GM12878 (cell line): ENCODE measurements at regions of chr10 and their contacts with region 1.

Region 1: GRCh38 chr10:81179805-81180452 is 642.2 kb downstream of the SH2D4B start:
- DNase-seq: peak; percentile 16
- ATAC-seq: peak; percentile 98
- H3K4me3 ChIP-seq: no peak overlapping the region
- H3K27ac ChIP-seq: no peak overlapping the region
- H3K4me1 ChIP-seq: no peaks in the 10 kb centered on the region
- H3K27me3 ChIP-seq: no peaks in the 10 kb centered on the region
- CTCF ChIP-seq: peak; percentile 53 to 71 (median 54); a peak in 5 of 6 replicates
- EP300 ChIP-seq: no peak
- POLR2A ChIP-seq: no peak
- RAD21 ChIP-seq: peak; percentile 88

Region 2: DNA sequence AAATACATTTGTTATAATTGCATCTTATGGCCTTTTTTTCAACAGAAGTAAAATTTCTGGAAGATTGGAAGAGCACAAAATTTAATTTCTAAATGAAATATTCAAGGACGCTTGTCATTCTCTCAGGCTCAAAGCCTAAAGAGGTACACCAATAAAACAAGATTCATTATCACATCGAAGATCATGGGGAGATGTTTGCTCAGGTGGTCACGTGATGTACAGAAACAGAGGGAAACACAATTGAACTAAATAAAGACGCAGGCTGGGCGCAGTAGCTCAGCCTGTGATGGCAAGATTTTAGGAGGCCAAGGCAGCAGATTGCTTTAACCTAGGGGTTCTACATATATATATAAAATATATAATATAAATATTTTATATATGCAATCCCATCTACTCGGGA is 1138.8 kb before region 1 on chr10:
- CTCF ChIA-PET with region 1: no interaction called
- POLR2A ChIA-PET with region 1: no interaction called
- RAD21 ChIA-PET with region 1: no interaction called
- SMC1A ChIA-PET with region 1: no interaction called
- in situ Hi-C with region 1: no loop called
- intact Hi-C with region 1: no loop called
- DNase-seq: no peak
- ATAC-seq: no peak
- H3K4me3 ChIP-seq: no peak overlapping the region
- H3K27ac ChIP-seq: no peak overlapping the region
- H3K4me1 ChIP-seq: no peaks in the 10 kb centered on the region
- H3K27me3 ChIP-seq: no peaks in the 10 kb centered on the region
- CTCF ChIP-seq: no peak
- EP300 ChIP-seq: no peak
- POLR2A ChIP-seq: no peak
- RAD21 ChIP-seq: no peak

Region 3: DNA sequence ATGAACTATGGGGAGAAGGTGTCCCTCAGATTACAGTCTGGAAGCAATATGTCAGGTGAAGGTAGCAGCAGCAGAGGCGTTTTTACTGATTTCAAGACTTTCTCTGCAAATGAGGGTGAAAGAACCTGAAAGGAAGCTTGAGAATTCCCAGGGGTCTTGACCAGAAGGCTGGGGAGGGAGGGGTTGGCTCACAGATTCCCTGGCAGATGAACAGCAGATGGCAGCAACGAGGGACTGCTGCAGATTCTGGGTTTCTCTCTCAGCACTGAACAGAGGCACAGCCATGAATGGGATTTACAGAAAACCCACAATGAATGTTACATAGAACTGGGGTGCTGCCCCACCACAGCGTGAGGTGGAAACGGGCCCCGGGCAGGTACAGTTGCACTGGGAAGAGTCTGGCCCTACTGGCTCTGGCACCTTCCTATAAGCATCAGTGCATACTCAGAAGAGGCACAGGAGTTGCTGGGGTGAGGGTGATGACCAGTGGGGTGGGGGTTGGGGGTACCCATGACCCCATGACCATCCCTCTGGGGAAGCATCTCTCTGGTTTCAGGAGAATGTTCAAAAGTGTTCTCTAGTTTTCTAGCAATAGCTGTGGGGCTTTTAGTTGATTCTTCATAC is 324.5 kb before region 1 on chr10:
- CTCF ChIA-PET with region 1: interaction called, 51 read pairs
- POLR2A ChIA-PET with region 1: no interaction called
- RAD21 ChIA-PET with region 1: interaction called, 9 read pairs
- SMC1A ChIA-PET with region 1: interaction called, 15 read pairs
- in situ Hi-C with region 1: loop called (anchors 10 kb)
- intact Hi-C with region 1: loop called (anchors 1 kb)
- DNase-seq: peak; percentile 13
- ATAC-seq: peak; percentile 92
- H3K4me3 ChIP-seq: no peak overlapping the region
- H3K27ac ChIP-seq: no peak overlapping the region
- H3K4me1 ChIP-seq: no peaks in the 10 kb centered on the region
- H3K27me3 ChIP-seq: peaks cover 0 to 2% of the 10 kb centered on the region in 2 experiments; a peak in 1 of 4 replicates
- CTCF ChIP-seq: peak; percentile 48 to 72 (median 67); a peak in 5 of 6 replicates
- EP300 ChIP-seq: no peak
- POLR2A ChIP-seq: no peak
- RAD21 ChIP-seq: peak; percentile 49

Region 4: DNA sequence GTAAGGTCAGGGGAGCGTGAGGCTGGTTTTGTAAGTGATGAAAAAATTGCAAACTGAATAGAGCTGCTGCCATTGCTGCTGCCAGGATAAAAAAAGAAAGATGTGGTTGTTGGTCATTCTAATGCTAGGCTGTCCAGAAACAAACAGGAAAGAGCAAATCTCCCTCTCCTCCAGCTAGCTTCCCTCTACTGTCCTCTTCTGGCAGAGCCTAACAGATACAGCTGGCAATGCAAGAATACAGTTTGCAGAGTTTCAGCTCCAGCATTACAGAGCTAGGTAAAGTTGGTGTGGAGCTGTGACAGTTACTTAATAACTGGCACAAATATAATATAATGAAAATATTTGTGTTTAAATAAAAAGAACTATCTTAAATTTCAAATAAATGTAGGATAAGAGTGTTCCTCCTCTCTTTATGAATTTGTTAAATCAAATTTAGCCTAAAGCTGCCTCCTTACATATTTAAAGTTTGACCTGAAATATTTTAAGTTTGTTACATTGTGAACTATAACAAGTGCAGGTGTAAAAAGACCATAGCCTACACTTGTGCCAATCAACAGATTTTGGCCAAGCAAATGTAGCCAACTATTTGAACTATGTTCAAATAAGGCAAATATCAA is 234.6 kb before region 1 on chr10:
- CTCF ChIA-PET with region 1: interaction called, 15 read pairs
- POLR2A ChIA-PET with region 1: no interaction called
- RAD21 ChIA-PET with region 1: interaction called, 32 read pairs
- SMC1A ChIA-PET with region 1: interaction called, 13 read pairs
- in situ Hi-C with region 1: no loop called
- intact Hi-C with region 1: no loop called
- DNase-seq: no peak
- ATAC-seq: peak; percentile 91
- H3K4me3 ChIP-seq: no peak overlapping the region
- H3K27ac ChIP-seq: no peak overlapping the region
- H3K4me1 ChIP-seq: no peaks in the 10 kb centered on the region
- H3K27me3 ChIP-seq: no peaks in the 10 kb centered on the region
- CTCF ChIP-seq: peak; percentile 54 to 86 (median 85)
- EP300 ChIP-seq: no peak
- POLR2A ChIP-seq: no peak
- RAD21 ChIP-seq: peak; percentile 79

Region 5: DNA sequence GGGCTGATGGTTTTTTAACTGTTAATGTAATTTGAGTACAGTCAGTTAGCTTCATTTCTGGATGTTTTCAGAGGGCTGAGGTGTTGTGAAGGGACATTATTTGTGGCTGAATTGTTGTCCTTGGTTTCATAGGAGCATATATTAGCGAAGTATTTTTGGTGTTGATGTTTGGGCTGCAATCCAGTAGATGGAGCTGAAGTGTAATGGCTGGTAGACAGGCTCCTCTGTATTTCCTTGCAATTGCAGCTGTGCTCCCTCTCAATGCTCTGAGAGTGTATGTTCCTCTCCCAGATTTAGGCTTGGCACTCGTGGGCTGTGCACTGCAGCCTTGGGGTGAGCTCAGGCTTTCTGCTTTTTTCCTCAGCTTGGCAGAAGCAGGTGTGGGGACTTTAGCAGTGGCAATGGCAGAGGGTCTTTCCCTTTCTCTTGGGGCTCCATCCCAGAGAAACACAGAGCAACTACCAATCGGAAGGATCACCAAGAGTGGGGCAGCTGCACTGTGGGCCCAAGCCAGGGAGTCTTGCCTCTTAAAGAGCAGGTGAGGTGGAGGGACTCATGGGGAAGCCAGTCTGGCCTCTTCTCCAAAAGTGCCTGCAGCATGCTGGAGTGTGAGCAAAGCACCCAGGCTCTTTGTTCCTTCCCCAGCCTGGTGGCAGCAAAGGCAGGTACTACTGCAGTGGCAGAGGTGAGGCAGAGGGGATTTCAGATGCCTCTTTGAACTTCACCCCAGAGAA is 97.9 kb before region 1 on chr10:
- CTCF ChIA-PET with region 1: interaction called, 82 read pairs
- POLR2A ChIA-PET with region 1: no interaction called
- RAD21 ChIA-PET with region 1: interaction called, 65 read pairs
- SMC1A ChIA-PET with region 1: interaction called, 62 read pairs
- in situ Hi-C with region 1: no loop called
- intact Hi-C with region 1: loop called (anchors 1 kb)
- DNase-seq: no peak
- ATAC-seq: peak; percentile 74
- H3K4me3 ChIP-seq: no peak overlapping the region
- H3K27ac ChIP-seq: no peak overlapping the region
- H3K4me1 ChIP-seq: no peaks in the 10 kb centered on the region
- H3K27me3 ChIP-seq: no peaks in the 10 kb centered on the region
- CTCF ChIP-seq: peak; percentile 47 to 50 (median 49); a peak in 5 of 6 replicates
- EP300 ChIP-seq: no peak
- POLR2A ChIP-seq: no peak
- RAD21 ChIP-seq: peak; percentile 90

Region 6: DNA sequence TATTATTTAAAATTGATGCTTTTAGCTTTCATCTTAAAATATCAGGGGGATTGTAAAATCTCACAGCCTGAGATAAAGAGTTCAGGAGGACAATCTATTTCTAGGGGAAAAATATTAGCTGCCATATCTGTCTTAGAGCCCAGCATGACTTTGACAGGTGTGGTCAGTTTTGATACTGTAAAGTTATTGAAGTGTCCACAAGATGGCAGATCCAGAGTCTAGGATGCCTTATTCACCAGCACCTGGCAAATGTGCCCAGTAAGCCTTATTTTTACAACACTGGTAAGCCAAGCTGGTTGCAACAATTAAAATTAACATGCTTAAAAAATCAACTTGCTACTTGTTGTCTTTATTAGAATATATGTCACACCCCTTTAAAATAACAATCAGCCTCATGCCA is 62.9 kb before region 1 on chr10:
- CTCF ChIA-PET with region 1: interaction called, 16 read pairs
- POLR2A ChIA-PET with region 1: no interaction called
- RAD21 ChIA-PET with region 1: interaction called, 20 read pairs
- SMC1A ChIA-PET with region 1: interaction called, 12 read pairs
- in situ Hi-C with region 1: no loop called
- intact Hi-C with region 1: no loop called
- DNase-seq: no peak
- ATAC-seq: peak; percentile 58
- H3K4me3 ChIP-seq: no peak overlapping the region
- H3K27ac ChIP-seq: no peak overlapping the region
- H3K4me1 ChIP-seq: no peaks in the 10 kb centered on the region
- H3K27me3 ChIP-seq: no peaks in the 10 kb centered on the region
- CTCF ChIP-seq: no peak
- EP300 ChIP-seq: no peak
- POLR2A ChIP-seq: no peak
- RAD21 ChIP-seq: no peak

Region 7: GRCh38 chr10:81157681-81158080 is 22.2 kb before region 1 on chr10:
- CTCF ChIA-PET with region 1: interaction called, 18 read pairs
- POLR2A ChIA-PET with region 1: no interaction called
- RAD21 ChIA-PET with region 1: interaction called, 13 read pairs
- SMC1A ChIA-PET with region 1: interaction called, 13 read pairs
- in situ Hi-C with region 1: no loop called
- intact Hi-C with region 1: no loop called
- DNase-seq: no peak
- ATAC-seq: peak; percentile 69
- H3K4me3 ChIP-seq: no peak overlapping the region
- H3K27ac ChIP-seq: no peak overlapping the region
- H3K4me1 ChIP-seq: no peaks in the 10 kb centered on the region
- H3K27me3 ChIP-seq: no peaks in the 10 kb centered on the region
- CTCF ChIP-seq: no peak
- EP300 ChIP-seq: no peak
- POLR2A ChIP-seq: no peak
- RAD21 ChIP-seq: no peak